ENCODE measurements at regions of chr12 and their contacts with region 1.

Region 1: DNA sequence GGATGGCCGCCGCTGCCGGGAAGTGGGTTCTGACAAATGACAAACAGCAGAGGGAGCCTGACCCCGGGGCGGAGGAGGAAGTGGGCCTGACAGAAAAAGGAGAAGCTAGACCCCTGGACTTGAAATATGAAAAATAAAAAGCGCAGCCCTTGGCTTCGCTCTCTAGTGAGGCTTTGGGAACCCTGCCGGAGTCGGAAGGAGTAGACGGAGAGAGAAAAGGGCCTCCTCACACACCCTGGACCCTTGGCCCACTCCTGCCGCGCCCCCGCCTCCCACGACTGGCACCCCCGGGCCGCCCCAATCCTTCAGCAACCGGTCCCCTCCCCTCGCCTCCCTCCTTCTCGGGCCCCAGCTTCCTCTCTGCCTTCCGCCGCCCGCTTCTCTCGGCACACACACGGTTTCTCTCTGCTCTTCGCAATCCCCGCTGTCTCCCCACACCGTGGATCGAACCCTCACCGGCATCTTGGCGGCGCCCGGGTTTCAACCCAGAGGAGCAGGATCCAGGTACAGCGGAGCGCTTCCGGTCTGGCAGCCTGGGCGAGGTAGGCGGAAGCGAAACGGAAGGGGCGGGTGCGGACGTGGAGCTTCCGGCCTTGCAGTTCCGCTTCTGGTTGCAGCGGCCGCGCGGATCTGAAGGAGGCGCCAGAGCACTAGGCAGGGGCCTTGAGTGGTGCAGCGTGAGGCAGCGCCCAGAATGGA is at the start of gene ARPC3:
- DNase-seq: peak; percentile 97
- ATAC-seq: peak; percentile 89
- H3K4me3 ChIP-seq: peak within 1 kb of the TSS; percentile 78 to 96 (median 96)
- H3K4me3 Mint-ChIP-seq: peak within 1 kb of the TSS; percentile 98
- H3K27ac ChIP-seq: peak within 1 kb of the TSS; percentile 96 to 98
- H3K27ac Mint-ChIP-seq: peak within 1 kb of the TSS; percentile 100
- H3K4me1 ChIP-seq: peaks cover 36 to 50% of the 10 kb centered on the region in 2 donors
- H3K4me1 Mint-ChIP-seq: peaks cover 42% of the 10 kb centered on the region
- H3K27me3 ChIP-seq: no peaks in the 10 kb centered on the region
- H3K27me3 Mint-ChIP-seq: no peaks in the 10 kb centered on the region
- CTCF ChIP-seq: peak; percentile 84
- total RNA-seq, gene ARPC3: 360 and 374 TPM in 2 replicates

Region 2: GRCh38 chr12:110079477-110080400 is 370.2 kb before region 1 on chr12:
- CTCF ChIA-PET with region 1: no interaction called
- POLR2A ChIA-PET with region 1: no interaction called
- intact Hi-C with region 1: no loop called
- DNase-seq: peak; percentile 88
- ATAC-seq: peak; percentile 95
- H3K4me3 ChIP-seq: peak overlapping the region; percentile 47 to 60 (median 48)
- H3K4me3 Mint-ChIP-seq: peak overlapping the region; percentile 87
- H3K27ac ChIP-seq: peak overlapping the region; percentile 87 to 90
- H3K27ac Mint-ChIP-seq: peak overlapping the region; percentile 98
- H3K4me1 ChIP-seq: peaks cover 19 to 23% of the 10 kb centered on the region in 2 donors
- H3K4me1 Mint-ChIP-seq: peaks cover 18% of the 10 kb centered on the region
- H3K27me3 ChIP-seq: no peaks in the 10 kb centered on the region
- H3K27me3 Mint-ChIP-seq: no peaks in the 10 kb centered on the region
- CTCF ChIP-seq: no peak

Region 3: DNA sequence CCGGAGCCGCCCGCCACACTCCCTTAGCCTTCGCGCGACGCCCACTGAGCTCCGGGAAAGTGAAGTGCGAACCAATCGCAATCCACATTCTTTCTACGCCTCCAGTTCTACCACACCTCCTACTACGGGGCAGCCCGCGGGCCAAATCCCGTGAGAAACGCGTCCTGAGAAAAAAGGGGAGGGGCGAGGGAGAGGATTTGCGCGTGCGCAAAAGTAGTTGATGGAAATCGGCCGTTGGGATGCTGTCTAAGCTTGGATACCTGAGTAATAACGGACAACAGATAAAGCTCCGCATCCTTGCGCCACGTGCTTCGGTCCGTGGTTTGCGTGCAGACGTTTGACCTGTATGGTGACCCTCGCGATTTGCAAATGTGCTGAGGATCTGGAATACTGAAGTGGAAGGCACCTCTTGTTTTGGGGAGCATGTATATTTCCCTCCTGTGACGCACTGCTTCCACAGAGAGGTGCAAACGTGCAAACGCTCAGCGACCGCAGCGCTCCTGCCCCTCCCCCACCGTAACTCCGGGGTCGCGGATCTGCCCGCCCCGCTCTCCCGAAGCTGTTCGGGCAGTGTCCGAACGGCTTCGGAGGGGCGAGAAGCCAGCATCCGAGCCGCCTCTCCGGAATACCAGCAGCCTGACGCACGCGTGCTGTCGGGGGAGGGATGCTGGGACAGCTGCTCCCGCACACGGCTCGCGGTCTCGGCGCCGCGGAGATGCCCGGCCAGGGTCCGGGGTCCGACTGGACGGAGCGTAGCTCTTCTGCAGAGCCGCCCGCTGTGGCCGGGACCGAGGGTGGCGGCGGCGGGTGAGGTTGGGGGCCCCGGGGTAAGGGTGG is 18.5 kb after region 1 on chr12 and contains the starts of genes FAM216A and GPN3:
- CTCF ChIA-PET with region 1: interaction called, 174 read pairs
- POLR2A ChIA-PET with region 1: interaction called, 45 read pairs
- intact Hi-C with region 1: loop called (anchors 1 kb)
- DNase-seq: peak; percentile 97
- ATAC-seq: peak; percentile 91
- H3K4me3 ChIP-seq: peak within 1 kb of the TSS; percentile 72 to 100 (median 95)
- H3K4me3 Mint-ChIP-seq: peak within 1 kb of the TSS; percentile 100
- H3K27ac ChIP-seq: peak within 1 kb of the TSS; percentile 69 to 79
- H3K27ac Mint-ChIP-seq: peak within 1 kb of the TSS; percentile 98
- H3K4me1 ChIP-seq: peaks cover 22 to 24% of the 10 kb centered on the region in 2 donors
- H3K4me1 Mint-ChIP-seq: peaks cover 42% of the 10 kb centered on the region
- H3K27me3 ChIP-seq: no peaks in the 10 kb centered on the region
- H3K27me3 Mint-ChIP-seq: no peaks in the 10 kb centered on the region
- CTCF ChIP-seq: no peak
- total RNA-seq, gene FAM216A: 15.4 and 15.7 TPM in 2 replicates
- total RNA-seq, gene GPN3: 12.3 and 13.4 TPM in 2 replicates

Region 4: GRCh38 chr12:110531741-110532333 is 81.9 kb after region 1 on chr12:
- CTCF ChIA-PET with region 1: interaction called, 20 read pairs
- POLR2A ChIA-PET with region 1: no interaction called
- intact Hi-C with region 1: no loop called
- DNase-seq: no peak
- ATAC-seq: no peak
- H3K4me3 ChIP-seq: no peak overlapping the region
- H3K4me3 Mint-ChIP-seq: no peak overlapping the region
- H3K27ac ChIP-seq: peak overlapping the region in 1 of 2 donors; percentile 2
- H3K27ac Mint-ChIP-seq: peak overlapping the region; percentile 22
- H3K4me1 ChIP-seq: peaks cover 0 to 3% of the 10 kb centered on the region in 2 donors
- H3K4me1 Mint-ChIP-seq: peaks cover 20% of the 10 kb centered on the region
- H3K27me3 ChIP-seq: no peaks in the 10 kb centered on the region
- H3K27me3 Mint-ChIP-seq: no peaks in the 10 kb centered on the region
- CTCF ChIP-seq: no peak

Region 5: DNA sequence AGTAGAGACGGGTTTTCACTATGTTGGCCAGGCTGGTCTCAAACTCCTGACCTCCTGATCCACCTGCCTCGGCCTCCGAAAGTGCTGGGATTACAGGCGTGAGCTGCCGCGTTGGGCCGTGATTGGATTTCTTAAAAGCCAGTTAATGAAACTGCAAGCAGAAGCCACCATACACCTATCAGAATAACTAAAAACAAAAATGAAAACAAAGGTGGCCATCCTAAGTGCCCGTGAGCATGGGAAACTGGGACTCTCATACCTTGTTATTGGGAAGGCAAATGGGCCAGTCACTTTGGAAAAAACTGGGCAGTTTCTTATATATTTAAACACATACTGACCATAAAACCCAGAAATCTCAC is 156.3 kb after region 1 on chr12:
- CTCF ChIA-PET with region 1: interaction called, 329 read pairs
- POLR2A ChIA-PET with region 1: interaction called, 15 read pairs
- intact Hi-C with region 1: no loop called
- DNase-seq: peak; percentile 43
- ATAC-seq: no peak
- H3K4me3 ChIP-seq: peak overlapping the region; percentile 7 to 74 (median 55)
- H3K4me3 Mint-ChIP-seq: peak overlapping the region; percentile 77
- H3K27ac ChIP-seq: peak overlapping the region; percentile 77 to 94
- H3K27ac Mint-ChIP-seq: peak overlapping the region; percentile 88
- H3K4me1 ChIP-seq: peaks cover 71 to 83% of the 10 kb centered on the region in 2 donors
- H3K4me1 Mint-ChIP-seq: peaks cover 65% of the 10 kb centered on the region
- H3K27me3 ChIP-seq: no peaks in the 10 kb centered on the region
- H3K27me3 Mint-ChIP-seq: no peaks in the 10 kb centered on the region
- CTCF ChIP-seq: no peak

Region 6: DNA sequence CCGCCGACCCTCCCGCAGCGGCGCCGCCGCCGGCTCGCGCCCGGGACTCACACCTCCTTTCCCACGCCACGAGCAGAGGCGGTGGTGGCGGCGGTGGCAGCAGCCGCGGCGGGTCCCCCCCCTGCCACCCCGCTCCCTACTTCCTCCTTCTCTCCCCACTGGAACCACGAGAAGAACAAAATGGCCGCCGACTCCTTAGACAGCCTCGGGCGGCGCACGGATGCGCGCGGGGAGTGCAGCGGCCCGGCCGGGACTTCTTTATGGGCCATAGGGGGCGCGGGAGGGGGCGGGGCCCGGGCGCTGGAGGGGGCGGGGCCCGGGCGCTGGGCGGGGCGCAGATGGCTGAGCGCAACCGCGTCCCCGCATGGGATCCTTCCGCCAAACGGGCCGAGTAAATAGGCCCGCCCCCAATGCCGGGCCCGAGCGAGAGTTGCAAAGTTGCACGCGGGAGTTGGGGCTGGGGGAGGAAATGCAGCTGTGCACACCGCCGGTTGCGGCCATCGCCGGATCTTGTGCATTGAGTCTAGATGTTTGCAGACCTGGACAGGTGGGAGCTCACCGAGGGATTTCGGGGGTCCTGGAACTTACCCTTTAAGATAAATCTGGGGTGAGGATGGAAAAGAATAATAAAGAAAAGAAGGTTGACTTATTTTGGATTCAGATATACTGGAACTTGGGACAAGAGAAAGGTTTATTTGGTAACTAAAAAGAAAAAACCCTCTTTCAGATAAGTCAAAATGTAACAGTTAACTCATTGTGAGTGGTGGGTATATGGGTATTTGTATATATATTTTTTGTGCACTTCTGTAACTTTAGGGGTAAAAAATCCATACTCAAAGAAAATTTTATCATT is 293.0 kb after region 1 on chr12 and contains the start of gene PPP1CC:
- CTCF ChIA-PET with region 1: interaction called, 6 read pairs
- POLR2A ChIA-PET with region 1: no interaction called
- intact Hi-C with region 1: loop called (anchors 1 kb)
- DNase-seq: peak; percentile 97
- ATAC-seq: peak; percentile 95
- H3K4me3 ChIP-seq: peak within 1 kb of the TSS; percentile 86 to 94 (median 92)
- H3K4me3 Mint-ChIP-seq: peak within 1 kb of the TSS; percentile 99
- H3K27ac ChIP-seq: peak within 1 kb of the TSS; percentile 31 to 78
- H3K27ac Mint-ChIP-seq: peak within 1 kb of the TSS; percentile 95
- H3K4me1 ChIP-seq: peaks cover 32 to 36% of the 10 kb centered on the region in 2 donors
- H3K4me1 Mint-ChIP-seq: peaks cover 40% of the 10 kb centered on the region
- H3K27me3 ChIP-seq: no peaks in the 10 kb centered on the region
- H3K27me3 Mint-ChIP-seq: no peaks in the 10 kb centered on the region
- CTCF ChIP-seq: no peak
- total RNA-seq, gene PPP1CC: 146 and 150 TPM in 2 replicates

Measured in B cell (primary cell).